ENCODE measurements at regions of chr2 and their contacts with region 1.

Region 1: DNA sequence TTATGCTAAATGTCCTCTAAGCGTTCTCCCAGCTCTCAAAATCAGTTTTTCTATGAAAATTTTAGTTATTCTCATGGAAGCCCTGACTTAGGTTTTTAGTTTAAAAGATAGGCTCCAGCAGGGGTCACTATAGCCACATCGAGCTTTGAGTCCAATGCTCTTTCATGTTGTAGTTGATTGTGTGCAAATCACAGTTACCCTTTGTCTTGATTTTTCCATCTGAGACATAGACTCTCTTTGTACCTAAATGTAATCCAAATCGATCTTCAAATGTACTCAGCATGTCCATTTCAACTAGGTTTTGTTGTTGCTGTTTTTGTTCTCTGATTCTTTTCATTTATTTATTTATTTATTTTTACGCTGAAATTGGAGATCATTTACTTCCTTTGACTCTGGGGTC is 26.4 kb upstream of the MSTN start:
- DNase-seq: peak; percentile 82
- H3K4me3 ChIP-seq: no peak overlapping the region
- H3K27ac ChIP-seq: no peak overlapping the region
- H3K4me1 ChIP-seq: no peaks in the 10 kb centered on the region; the same call in 1 of the 2 replicates
- H3K27me3 ChIP-seq: no peaks in the 10 kb centered on the region

Region 2: DNA sequence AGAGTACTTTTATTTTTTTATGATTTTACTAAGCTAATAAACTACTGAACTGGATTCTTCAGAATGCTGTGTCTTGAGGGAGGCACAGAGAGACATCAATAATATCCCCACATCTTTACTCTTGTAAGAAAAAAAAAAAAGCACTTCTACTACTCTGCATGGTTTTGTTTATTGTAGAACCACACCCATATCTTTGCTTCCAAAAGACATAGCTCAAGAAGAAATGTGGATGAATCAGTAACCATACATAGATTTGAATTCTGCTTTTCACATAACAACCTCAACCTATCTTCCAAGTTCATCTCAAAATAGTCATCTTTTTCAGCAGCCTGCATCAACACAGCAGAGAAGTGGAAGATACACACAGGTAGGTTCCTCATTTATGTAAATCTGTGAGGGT is 897.2 kb before region 1 on chr2:
- in situ Hi-C with region 1: no loop called
- DNase-seq: peak; percentile 72
- H3K4me3 ChIP-seq: no peak overlapping the region
- H3K27ac ChIP-seq: peak overlapping the region; percentile 45
- H3K4me1 ChIP-seq: peaks cover 13% of the 10 kb centered on the region
- H3K27me3 ChIP-seq: no peaks in the 10 kb centered on the region

Region 3: DNA sequence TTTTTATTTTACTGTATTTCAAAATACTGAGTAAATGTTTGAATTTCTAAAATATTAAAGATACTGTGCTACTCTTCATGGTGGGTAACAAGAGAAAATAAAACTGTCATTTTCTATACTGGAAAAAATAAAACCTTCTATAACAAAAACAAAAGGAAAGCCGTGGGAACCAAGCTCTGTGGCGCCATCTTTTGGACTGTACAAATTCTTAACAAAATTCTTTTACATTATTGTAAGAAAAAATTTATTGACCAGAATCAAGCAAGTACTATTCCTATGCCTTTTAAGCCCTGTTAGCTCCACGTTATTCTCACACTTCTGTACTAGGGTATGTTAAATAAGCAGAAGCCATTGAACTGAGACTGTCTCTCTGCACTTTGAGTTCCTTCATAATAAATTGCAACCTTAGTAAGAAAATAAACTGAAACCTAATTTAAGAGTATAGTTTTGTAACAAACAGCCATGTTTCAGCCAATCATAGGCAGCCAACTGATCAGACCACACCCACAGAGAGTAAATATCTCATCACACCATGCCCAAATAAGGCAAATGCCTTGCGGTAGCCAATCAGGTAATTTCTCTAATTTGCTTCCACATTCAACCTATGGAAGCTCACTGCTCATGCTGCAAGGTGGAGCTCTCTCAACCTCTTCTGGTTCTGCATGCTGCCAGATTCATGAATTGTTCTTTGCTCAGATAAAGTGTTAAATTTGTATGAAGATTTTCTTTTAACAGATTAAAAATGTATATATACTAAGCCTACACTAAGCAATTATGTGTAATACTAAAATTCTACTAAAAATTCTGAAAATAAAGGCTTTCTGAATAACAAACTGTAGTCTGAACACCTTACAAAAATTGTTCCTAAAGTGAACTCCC is 188.6 kb after region 1 on chr2:
- in situ Hi-C with region 1: loop called (anchors 10 kb)
- DNase-seq: peak; percentile 71
- H3K4me3 ChIP-seq: no peak overlapping the region
- H3K27ac ChIP-seq: no peak overlapping the region
- H3K4me1 ChIP-seq: no peaks in the 10 kb centered on the region
- H3K27me3 ChIP-seq: no peaks in the 10 kb centered on the region

Region 4: GRCh38 chr2:190507135-190507534 is 418.2 kb after region 1 on chr2:
- in situ Hi-C with region 1: loop called (anchors 10 kb)
- DNase-seq: no peak
- H3K4me3 ChIP-seq: no peak overlapping the region
- H3K27ac ChIP-seq: no peak overlapping the region
- H3K4me1 ChIP-seq: no peaks in the 10 kb centered on the region
- H3K27me3 ChIP-seq: no peaks in the 10 kb centered on the region

Measured in GM23248 (cell line).